ENCODE measurements at regions of chr6 and their contacts with region 1.

Region 1: GRCh38 chr6:1381481-1382330 is 7.7 kb upstream of the FOXF2 start:
- DNase-seq: peak; percentile 69 to 86
- H3K4me3 ChIP-seq: peak overlapping the region; percentile 43 to 50 (median 44)
- H3K27ac ChIP-seq: peak overlapping the region; percentile 69 to 90 (median 83)
- H3K4me1 ChIP-seq: peaks cover 51 to 88% (median 70%) of the 10 kb centered on the region in 4 donors
- H3K27me3 ChIP-seq: peaks cover 57 to 100% (median 99%) of the 10 kb centered on the region in 3 donors
- CTCF ChIP-seq: peak in 5 of 7 experiments; percentile 47 to 96 (median 82)
- EP300 ChIP-seq: no peak
- POLR2A ChIP-seq: no peak

Region 2: DNA sequence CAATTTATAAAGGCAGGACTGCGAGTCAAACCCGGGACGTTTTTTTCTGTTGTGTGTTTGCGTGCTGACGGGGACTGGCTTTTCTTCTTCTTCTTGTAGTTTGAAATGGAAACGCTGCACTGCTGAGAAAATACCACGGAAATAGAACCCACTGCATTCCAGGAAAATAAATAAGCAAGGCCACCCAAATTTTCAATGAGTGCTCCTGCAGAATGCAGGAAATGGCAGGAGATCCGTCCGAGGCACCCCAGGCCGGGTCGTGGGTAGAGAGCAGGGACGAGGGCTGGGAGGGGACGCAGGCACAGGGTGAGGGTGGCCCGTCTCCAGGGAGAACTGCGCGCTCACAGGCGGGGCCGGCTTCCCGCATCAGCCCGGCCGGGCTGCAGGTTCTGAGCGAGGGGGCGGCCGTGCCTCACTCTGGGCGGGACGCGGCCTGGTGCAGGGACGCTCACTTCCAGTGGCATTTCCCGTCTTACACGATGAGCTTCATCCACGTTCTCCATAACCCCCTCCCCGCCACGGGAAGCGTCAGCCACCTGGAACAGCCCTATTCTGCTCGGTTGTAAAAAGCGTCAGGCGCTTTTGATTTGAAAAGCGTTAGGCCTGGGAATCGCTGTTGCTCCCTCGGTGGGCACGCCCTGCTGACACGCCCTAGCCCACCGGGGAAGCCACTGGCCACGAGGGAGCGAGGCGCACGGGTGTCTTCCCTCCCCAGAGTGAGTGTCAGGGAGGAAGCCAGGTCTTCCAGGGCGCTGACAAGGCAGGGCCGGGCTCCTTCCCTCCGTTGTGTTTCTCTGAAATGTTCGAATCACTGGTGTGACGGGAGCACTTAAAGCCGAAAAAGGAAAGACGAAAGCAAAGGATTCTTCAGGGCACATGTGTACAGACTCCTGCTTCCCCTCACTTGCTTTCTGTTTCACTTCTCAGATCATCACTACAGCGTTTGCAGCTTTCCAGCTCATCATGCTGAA is 670.8 kb before region 1 on chr6:
- intact Hi-C with region 1: loop called (anchors 10 kb)
- DNase-seq: peak; percentile 61 to 82
- H3K4me3 ChIP-seq: peak overlapping the region; percentile 48 to 71 (median 59)
- H3K27ac ChIP-seq: peak overlapping the region; percentile 64 to 94 (median 91)
- H3K4me1 ChIP-seq: peaks cover 11 to 29% (median 22%) of the 10 kb centered on the region in 4 donors
- H3K27me3 ChIP-seq: peaks cover 0 to 6% (median 0%) of the 10 kb centered on the region in 3 donors
- CTCF ChIP-seq: no peak
- EP300 ChIP-seq: no peak
- POLR2A ChIP-seq: no peak

Measured in stomach (tissue), 19 donors.